ENCODE measurements at regions of chr14 and their contacts with region 1.

Region 1: DNA sequence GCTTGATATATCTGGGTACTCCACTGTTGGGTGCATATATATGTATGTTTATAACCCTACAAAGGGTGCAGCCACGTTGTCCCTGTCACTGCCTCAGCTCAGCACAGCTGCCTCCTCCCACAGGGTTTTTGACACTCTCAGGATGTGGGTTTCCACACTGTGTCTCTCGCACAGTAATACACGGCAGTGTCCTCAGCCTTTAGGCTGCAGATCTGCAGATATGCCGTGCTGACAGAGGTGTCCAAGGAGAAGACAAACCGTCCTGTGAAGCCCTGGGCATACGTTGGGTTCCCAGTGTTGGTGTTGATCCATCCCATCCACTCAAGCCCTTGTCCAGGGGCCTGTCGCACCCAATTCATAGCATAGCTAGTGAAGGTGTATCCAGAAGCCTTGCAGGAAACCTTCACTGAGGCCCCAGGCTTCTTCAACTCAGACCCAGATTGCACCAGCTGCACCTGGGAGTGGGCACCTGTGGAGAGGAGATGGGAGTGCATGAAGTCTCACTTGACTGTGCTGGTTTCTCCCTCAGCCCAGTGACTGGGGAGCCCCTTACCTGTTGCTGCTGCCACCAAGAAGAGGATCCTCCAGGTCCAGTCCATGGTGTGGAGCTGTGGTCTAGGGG is 498.7 kb downstream of the TMEM121 start:
- DNase-seq: peak; percentile 52
- ATAC-seq: peak; percentile 79
- H3K4me3 Mint-ChIP-seq: no peak overlapping the region
- H3K27ac Mint-ChIP-seq: no peak overlapping the region
- H3K4me1 Mint-ChIP-seq: peaks cover 42% of the 10 kb centered on the region
- H3K27me3 Mint-ChIP-seq: no peaks in the 10 kb centered on the region
- CTCF ChIP-seq: no peak

Region 2: DNA sequence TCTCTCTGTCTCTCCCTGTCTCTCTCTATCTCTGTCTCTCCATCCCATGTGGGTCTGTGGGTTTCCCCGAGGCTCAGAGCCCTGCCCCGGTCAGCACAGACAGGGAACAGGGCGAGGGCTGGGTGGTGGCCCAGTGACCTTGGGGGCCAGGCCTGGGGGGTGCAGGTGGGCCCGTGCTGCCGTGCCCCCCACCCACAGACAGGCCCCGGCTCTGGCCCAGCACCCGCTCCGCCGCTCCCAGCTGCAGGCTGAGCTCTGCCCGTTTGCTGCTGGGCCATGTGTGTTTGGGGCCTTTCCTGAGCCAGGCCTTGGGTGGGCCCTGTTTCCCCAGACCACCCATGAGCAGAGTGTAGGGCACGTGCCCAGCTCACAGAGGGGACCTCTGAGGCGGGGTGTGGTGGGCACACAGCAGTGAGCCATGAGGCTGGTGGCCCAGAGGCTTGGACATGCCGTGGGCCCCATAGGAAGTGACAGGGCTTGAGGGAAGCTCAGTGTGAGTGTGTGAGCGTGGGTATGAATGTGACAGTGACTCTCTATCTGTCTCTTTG is 447.7 kb before region 1 on chr14:
- CTCF ChIA-PET with region 1: no interaction called
- POLR2A ChIA-PET with region 1: no interaction called
- intact Hi-C with region 1: no loop called
- DNase-seq: peak; percentile 22
- ATAC-seq: no peak
- H3K4me3 Mint-ChIP-seq: no peak overlapping the region
- H3K27ac Mint-ChIP-seq: no peak overlapping the region
- H3K4me1 Mint-ChIP-seq: no peaks in the 10 kb centered on the region
- H3K27me3 Mint-ChIP-seq: no peaks in the 10 kb centered on the region
- CTCF ChIP-seq: no peak

Region 3: GRCh38 chr14:106013879-106014376 is 11.2 kb before region 1 on chr14:
- CTCF ChIA-PET with region 1: interaction called, 16 read pairs
- POLR2A ChIA-PET with region 1: interaction called, 3 read pairs
- intact Hi-C with region 1: no loop called
- DNase-seq: peak; percentile 46
- ATAC-seq: peak; percentile 85
- H3K4me3 Mint-ChIP-seq: peak overlapping the region; percentile 51
- H3K27ac Mint-ChIP-seq: peak overlapping the region; percentile 93
- H3K4me1 Mint-ChIP-seq: peaks cover 57% of the 10 kb centered on the region
- H3K27me3 Mint-ChIP-seq: peaks cover 3% of the 10 kb centered on the region
- CTCF ChIP-seq: no peak